ENCODE measurements at regions of chr6 and their contacts with region 1.

Region 1: GRCh38 chr6:12890171-12890790 is 173.7 kb downstream of the PHACTR1 start:
- DNase-seq: no peak
- ATAC-seq: no peak
- H3K4me3 ChIP-seq: no peak overlapping the region
- H3K27ac ChIP-seq: no peak overlapping the region
- H3K4me1 ChIP-seq: no peaks in the 10 kb centered on the region
- H3K27me3 ChIP-seq: no peaks in the 10 kb centered on the region
- CTCF ChIP-seq: peak; percentile 22; the same call in 1 of the 2 replicates
- POLR2A ChIP-seq: no peak
- RAD21 ChIP-seq: no peak

Region 2: DNA sequence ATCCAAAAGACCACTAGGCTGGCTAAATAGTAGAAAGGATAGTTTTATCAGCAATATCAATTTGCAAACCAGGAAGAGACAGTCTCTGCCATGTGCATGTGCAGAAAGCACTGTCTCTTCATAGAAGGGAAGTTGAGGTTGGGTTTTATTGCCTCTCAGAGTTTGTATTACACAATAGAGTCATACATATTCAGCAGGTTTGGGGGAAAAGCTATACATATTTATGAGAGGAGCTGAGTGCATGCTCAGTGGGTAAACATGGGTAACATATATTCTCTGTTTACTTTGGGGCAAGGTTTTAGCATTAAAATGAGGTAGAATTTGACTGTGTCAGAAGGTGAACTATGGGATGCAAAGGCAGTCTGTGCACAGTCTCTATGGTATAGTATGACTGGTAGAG is 1337.8 kb before region 1 on chr6:
- CTCF ChIA-PET with region 1: no interaction called
- POLR2A ChIA-PET with region 1: no interaction called
- dilution Hi-C with region 1: no loop called
- in situ Hi-C with region 1: loop called (anchors 25 kb)
- intact Hi-C with region 1: no loop called
- DNase-seq: no peak
- ATAC-seq: no peak
- H3K4me3 ChIP-seq: no peak overlapping the region
- H3K27ac ChIP-seq: no peak overlapping the region
- H3K4me1 ChIP-seq: no peaks in the 10 kb centered on the region
- H3K27me3 ChIP-seq: peaks cover 9% of the 10 kb centered on the region
- CTCF ChIP-seq: no peak
- POLR2A ChIP-seq: no peak
- RAD21 ChIP-seq: no peak

Region 3: GRCh38 chr6:12637960-12638641 is 252.2 kb before region 1 on chr6:
- CTCF ChIA-PET with region 1: interaction called, 3 read pairs
- POLR2A ChIA-PET with region 1: no interaction called
- dilution Hi-C with region 1: no loop called
- in situ Hi-C with region 1: loop called (anchors 25 kb)
- intact Hi-C with region 1: loop called (anchors 2 kb)
- DNase-seq: peak; percentile 31
- ATAC-seq: peak; percentile 69; the same call in 1 of the 2 replicates
- H3K4me3 ChIP-seq: no peak overlapping the region
- H3K27ac ChIP-seq: no peak overlapping the region
- H3K4me1 ChIP-seq: no peaks in the 10 kb centered on the region
- H3K27me3 ChIP-seq: no peaks in the 10 kb centered on the region
- CTCF ChIP-seq: peak; percentile 57
- POLR2A ChIP-seq: no peak
- RAD21 ChIP-seq: peak; percentile 54

Measured in IMR-90 (cell line).